ENCODE measurements at regions of chrX and their contacts with region 1.

Region 1: DNA sequence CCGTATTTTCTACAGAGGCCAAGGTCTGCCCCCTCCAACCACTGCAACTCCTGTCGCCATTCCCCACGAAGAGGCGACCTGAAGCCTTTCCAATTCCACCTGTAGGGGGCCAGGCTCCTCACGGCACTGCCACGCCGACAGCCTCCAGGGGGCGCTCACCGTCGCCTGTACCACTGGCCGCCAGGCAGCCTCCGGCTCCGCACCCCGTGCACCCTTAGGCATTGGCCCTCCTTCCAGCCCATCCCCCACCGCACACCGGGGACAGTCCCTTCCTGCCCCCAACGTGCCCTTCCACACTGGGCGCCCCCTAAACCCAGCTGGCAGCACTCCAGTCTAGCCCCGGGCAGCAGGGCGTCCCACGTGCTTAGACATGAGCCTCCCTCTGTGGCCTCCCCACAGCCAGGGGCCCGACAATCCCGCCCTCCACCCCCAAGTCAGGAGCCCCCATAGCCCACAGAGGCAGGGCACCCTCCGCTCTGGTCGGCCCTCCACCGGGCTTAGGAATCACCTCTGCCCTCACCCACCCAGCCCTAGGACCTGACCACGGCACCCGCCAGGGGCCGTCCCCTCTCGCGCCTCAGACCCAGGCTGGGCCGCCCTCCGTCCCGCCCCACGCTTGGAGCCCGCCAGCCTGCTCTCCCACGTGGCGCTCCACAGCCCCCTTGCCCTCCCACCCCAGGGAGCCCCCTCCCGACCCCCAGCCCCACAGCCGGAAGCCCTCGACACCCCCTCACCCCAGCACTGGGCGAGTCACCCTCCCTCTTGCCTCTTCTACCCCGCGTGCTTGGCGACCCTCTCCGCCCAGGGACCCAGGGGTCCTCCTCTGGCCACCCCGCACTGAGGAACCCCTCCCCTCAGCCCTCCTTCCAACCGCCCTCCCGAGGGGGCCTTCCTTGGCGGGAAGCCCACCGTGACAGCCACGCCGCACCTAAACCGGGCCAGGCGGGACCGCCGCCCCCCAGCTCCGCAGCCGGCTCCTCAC is 713 bp downstream of the PNMA6E start:
- DNase-seq: no peak
- H3K4me3 ChIP-seq: no peak overlapping the region
- H3K27ac ChIP-seq: no peak overlapping the region
- H3K4me1 ChIP-seq: no peaks in the 10 kb centered on the region
- H3K27me3 ChIP-seq: no peaks in the 10 kb centered on the region
- CTCF ChIP-seq: peak; percentile 75 to 81

Region 2: DNA sequence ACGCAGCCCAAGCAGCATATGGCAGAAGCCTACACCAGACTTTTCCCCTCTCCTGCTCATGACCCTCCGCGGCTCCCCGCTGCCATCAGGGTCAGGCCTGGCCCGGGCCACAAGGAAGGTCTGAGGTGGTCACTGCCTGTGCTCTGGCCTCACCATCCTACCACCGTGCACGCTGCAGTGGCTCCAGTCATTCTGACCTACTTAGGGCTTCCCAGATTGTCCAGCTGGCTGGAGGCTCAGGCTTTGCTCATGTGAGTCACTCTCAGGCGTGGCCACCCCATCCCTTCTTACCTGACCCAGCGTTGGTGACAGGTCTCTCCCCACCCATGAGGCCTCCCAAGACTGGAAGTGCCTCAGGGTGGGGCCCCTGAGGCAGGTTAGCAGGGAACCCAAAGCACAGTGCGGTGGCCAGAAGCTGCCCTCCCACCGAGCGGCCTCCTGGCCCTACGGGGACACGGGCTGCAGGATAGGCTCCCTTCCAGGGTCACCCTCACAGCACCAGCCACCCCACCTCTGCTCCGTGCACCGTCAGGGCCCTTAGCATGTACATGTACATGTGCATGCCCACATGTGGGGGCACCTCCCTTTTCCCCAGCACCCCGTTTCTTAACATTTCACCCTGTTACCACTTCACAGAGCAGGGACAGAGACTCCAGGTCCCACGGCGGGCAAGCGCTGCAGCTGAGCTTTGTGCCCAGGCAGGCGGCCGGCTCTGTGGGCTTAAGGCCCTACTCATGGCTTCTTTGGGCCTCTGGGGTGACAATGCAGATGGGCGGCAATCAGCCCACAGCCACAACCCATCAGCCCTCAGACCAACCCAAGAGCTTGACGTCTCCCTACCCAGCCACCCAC is 43.3 kb after region 1 on chrX:
- CTCF ChIA-PET with region 1: no interaction called
- dilution Hi-C with region 1: no loop called
- in situ Hi-C with region 1: no loop called
- intact Hi-C with region 1: loop called (anchors 5 kb)
- DNase-seq: peak; percentile 13
- H3K4me3 ChIP-seq: no peak overlapping the region
- H3K27ac ChIP-seq: no peak overlapping the region
- H3K4me1 ChIP-seq: peaks cover 22% of the 10 kb centered on the region
- H3K27me3 ChIP-seq: no peaks in the 10 kb centered on the region
- CTCF ChIP-seq: no peak

Region 3: GRCh38 chrX:153507484-153508178 is 107.2 kb after region 1 on chrX:
- CTCF ChIA-PET with region 1: no interaction called
- dilution Hi-C with region 1: no loop called
- in situ Hi-C with region 1: no loop called
- intact Hi-C with region 1: loop called (anchors 1 kb)
- DNase-seq: peak; percentile 47
- H3K4me3 ChIP-seq: no peak overlapping the region
- H3K27ac ChIP-seq: no peak overlapping the region
- H3K4me1 ChIP-seq: no peaks in the 10 kb centered on the region
- H3K27me3 ChIP-seq: no peaks in the 10 kb centered on the region
- CTCF ChIP-seq: peak; percentile 51 to 78

Region 4: GRCh38 chrX:153539171-153539978 is 138.9 kb after region 1 on chrX:
- CTCF ChIA-PET with region 1: interaction called, 21 read pairs
- dilution Hi-C with region 1: no loop called
- in situ Hi-C with region 1: no loop called
- intact Hi-C with region 1: no loop called
- DNase-seq: peak; percentile 30
- H3K4me3 ChIP-seq: no peak overlapping the region
- H3K27ac ChIP-seq: no peak overlapping the region
- H3K4me1 ChIP-seq: no peaks in the 10 kb centered on the region
- H3K27me3 ChIP-seq: no peaks in the 10 kb centered on the region
- CTCF ChIP-seq: peak; percentile 56 to 89